ENCODE measurements at regions of chr6 and their contacts with region 1.

Region 1: GRCh38 chr6:44064089-44064947 is 62.9 kb downstream of the MRPL14 start:
- DNase-seq: no peak
- ATAC-seq: peak; percentile 54
- H3K4me3 ChIP-seq: no peak overlapping the region
- H3K27ac ChIP-seq: no peak overlapping the region
- H3K4me1 ChIP-seq: peaks cover 0 to 38% of the 10 kb centered on the region in 2 experiments; a peak in 2 of 4 replicates
- H3K27me3 ChIP-seq: no peaks in the 10 kb centered on the region
- CTCF ChIP-seq: no peak
- POLR2A ChIP-seq: no peak
- RAD21 ChIP-seq: no peak

Region 2: GRCh38 chr6:44010411-44011349 is 53.6 kb before region 1 on chr6:
- CTCF ChIA-PET with region 1: interaction called, 19 read pairs
- POLR2A ChIA-PET with region 1: interaction called, 9 read pairs
- RAD21 ChIA-PET with region 1: interaction called in 1 of 2 experiments, 3 read pairs
- intact Hi-C with region 1: no loop called
- DNase-seq: peak; percentile 74
- ATAC-seq: peak; percentile 91
- H3K4me3 ChIP-seq: peak overlapping the region; percentile 5 to 14; a peak in 3 of 4 replicates
- H3K27ac ChIP-seq: peak overlapping the region; percentile 24; the same call in 1 of the 2 replicates
- H3K4me1 ChIP-seq: peaks cover 20 to 38% of the 10 kb centered on the region in 2 experiments
- H3K27me3 ChIP-seq: no peaks in the 10 kb centered on the region
- CTCF ChIP-seq: peak in 1 of 3 experiments; percentile 10; a peak in 1 of 6 replicates
- POLR2A ChIP-seq: no peak
- RAD21 ChIP-seq: no peak

Region 3: GRCh38 chr6:44052419-44053023 is 11.8 kb before region 1 on chr6:
- CTCF ChIA-PET with region 1: interaction called, 11 read pairs
- POLR2A ChIA-PET with region 1: no interaction called
- RAD21 ChIA-PET with region 1: no interaction called
- intact Hi-C with region 1: no loop called
- DNase-seq: no peak
- ATAC-seq: peak; percentile 70
- H3K4me3 ChIP-seq: no peak overlapping the region
- H3K27ac ChIP-seq: no peak overlapping the region
- H3K4me1 ChIP-seq: peaks cover 26 to 66% of the 10 kb centered on the region in 2 experiments
- H3K27me3 ChIP-seq: no peaks in the 10 kb centered on the region
- CTCF ChIP-seq: no peak
- POLR2A ChIP-seq: no peak
- RAD21 ChIP-seq: no peak

Region 4: DNA sequence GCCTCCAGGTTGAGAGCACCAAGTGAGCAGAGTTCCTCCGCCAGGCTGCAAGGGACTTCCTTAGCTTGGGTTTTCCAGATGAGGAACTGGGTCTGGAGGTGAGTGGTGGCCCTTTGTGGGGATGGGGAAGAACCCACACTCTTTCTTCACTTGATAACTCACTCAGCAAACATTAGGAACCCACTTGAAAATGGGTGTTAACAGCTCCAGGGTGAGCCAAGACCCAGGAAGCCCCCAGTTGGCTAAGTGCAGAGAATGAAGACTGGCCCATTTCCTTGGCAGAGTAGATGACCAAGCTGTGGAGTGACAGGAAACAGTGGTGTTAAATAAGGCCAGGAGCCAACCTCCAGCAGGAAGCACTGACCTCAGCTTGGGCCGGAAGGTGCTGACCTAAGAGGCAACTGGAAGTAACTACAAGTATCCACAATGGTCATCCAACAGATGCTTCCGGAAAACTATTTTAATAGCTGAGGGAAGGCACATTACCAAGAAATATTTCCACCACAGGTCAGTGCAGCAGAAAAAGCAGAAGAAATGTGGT is 40.2 kb after region 1 on chr6:
- CTCF ChIA-PET with region 1: no interaction called
- POLR2A ChIA-PET with region 1: no interaction called
- RAD21 ChIA-PET with region 1: no interaction called
- intact Hi-C with region 1: no loop called
- DNase-seq: no peak
- ATAC-seq: no peak
- H3K4me3 ChIP-seq: no peak overlapping the region
- H3K27ac ChIP-seq: no peak overlapping the region
- H3K4me1 ChIP-seq: no peaks in the 10 kb centered on the region
- H3K27me3 ChIP-seq: no peaks in the 10 kb centered on the region
- CTCF ChIP-seq: no peak
- POLR2A ChIP-seq: no peak
- RAD21 ChIP-seq: no peak

Measured in HCT116 (cell line).